Colonic mucosa (tissue), 4 donors: ENCODE measurements at regions of chr17 and their contacts with region 1.

Region 1: DNA sequence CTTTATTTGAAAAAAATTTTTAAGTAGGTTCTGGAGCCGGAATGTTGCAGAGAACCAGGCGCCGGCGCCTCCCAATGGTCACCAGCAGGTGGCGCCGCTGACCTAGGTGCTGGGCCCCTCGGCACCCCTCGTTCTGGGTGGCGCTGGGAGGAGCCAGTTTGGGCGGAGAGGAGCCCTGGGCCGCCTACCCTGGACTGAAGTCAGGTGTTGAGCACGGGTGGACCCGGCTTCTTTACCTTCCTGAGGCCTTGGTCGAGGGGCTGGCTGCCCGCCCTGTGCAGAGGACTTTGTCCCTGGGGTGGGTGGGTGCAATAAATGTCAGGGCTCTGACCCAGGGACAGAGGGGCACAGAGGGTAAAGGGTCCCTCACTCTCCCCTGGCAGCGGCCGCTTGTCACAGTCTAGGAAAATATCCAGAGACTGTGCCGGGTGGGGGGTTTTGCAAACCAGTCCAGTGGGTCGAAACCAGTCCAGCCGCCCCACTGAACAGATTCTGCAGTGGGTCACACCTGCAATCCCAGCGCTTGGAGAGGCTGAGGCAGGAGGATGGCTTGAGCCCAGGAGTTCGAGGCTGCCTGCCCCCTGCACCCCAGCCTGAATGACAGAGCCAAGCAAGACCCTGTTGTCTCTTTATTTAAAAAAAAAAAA is 30.1 kb upstream of the TNFRSF13B start:
- DNase-seq: peak; percentile 77
- H3K4me3 ChIP-seq: no peak overlapping the region
- H3K27ac ChIP-seq: no peak overlapping the region
- H3K4me1 ChIP-seq: no peaks in the 10 kb centered on the region
- H3K27me3 ChIP-seq: no peaks in the 10 kb centered on the region
- CTCF ChIP-seq: peak; percentile 95

Region 2: DNA sequence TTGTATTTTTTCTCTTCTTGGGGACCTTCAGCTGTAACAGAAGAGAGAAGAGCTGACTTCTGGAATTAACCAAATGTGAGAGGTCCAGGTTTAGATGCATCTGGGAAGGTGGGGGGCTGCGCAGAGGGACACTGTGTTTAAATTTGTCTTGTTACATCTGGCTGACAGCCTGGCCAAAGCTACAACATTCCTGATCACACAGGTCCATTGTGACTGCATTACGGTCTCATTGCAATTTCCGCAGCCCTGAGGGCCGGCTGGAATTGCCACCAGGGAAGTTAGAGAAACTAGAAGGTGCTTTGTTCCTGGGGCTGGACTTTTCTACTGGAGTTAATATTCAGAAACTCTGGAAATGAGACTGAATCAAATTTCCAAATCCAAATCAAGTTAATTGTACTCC is 472.1 kb before region 1 on chr17:
- intact Hi-C with region 1: no loop called
- DNase-seq: no peak
- H3K4me3 ChIP-seq: no peak overlapping the region
- H3K27ac ChIP-seq: no peak overlapping the region
- H3K4me1 ChIP-seq: no peaks in the 10 kb centered on the region
- H3K27me3 ChIP-seq: no peaks in the 10 kb centered on the region
- CTCF ChIP-seq: no peak

Region 3: GRCh38 chr17:17146786-17147406 is 144.9 kb after region 1 on chr17:
- intact Hi-C with region 1: loop called (anchors 5 kb)
- DNase-seq: no peak
- H3K4me3 ChIP-seq: no peak overlapping the region
- H3K27ac ChIP-seq: no peak overlapping the region
- H3K4me1 ChIP-seq: no peaks in the 10 kb centered on the region
- H3K27me3 ChIP-seq: no peaks in the 10 kb centered on the region
- CTCF ChIP-seq: peak; percentile 20

Region 4: DNA sequence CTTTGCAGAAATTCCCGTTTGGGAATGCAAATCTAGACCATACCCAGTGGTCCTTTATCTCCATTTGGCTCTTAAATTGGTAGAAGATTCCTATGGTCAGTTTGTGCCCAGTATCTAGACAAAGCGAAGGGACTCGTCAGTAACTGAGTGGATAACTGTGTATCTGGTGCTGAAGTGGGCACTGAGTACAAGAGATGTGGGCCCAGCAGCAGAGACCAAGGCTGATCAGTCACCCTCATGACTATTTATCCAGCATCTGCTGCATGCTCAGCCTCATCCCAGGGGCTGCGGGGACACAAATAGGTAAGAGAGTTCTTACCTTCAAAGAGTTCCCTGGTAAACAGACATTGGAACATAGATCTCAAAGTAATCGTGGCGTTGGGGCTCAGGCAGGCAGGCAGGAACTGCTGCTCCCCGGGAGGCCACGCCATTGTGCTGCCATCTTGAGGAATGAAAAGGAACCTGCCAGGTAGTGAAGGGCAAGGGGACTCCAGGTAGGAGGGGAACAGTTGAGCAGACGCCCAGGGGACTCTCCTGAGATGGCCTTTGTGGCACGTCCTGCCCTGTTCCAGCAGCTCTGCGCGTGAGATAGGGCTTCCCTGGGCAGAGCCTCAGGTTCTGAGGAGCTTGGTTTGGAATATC is 311.5 kb after region 1 on chr17:
- intact Hi-C with region 1: loop called (anchors 5 kb)
- DNase-seq: peak; percentile 59
- H3K4me3 ChIP-seq: no peak overlapping the region
- H3K27ac ChIP-seq: no peak overlapping the region
- H3K4me1 ChIP-seq: no peaks in the 10 kb centered on the region
- H3K27me3 ChIP-seq: no peaks in the 10 kb centered on the region
- CTCF ChIP-seq: peak; percentile 49